GM13976 (cell line): ENCODE measurements at regions of chr17 and their contacts with region 1.

Region 1: GRCh38 chr17:7912927-7913524 is 3.1 kb downstream of the RNF227 start:
- DNase-seq: peak; percentile 81
- CTCF ChIP-seq: peak; percentile 56

Region 2: DNA sequence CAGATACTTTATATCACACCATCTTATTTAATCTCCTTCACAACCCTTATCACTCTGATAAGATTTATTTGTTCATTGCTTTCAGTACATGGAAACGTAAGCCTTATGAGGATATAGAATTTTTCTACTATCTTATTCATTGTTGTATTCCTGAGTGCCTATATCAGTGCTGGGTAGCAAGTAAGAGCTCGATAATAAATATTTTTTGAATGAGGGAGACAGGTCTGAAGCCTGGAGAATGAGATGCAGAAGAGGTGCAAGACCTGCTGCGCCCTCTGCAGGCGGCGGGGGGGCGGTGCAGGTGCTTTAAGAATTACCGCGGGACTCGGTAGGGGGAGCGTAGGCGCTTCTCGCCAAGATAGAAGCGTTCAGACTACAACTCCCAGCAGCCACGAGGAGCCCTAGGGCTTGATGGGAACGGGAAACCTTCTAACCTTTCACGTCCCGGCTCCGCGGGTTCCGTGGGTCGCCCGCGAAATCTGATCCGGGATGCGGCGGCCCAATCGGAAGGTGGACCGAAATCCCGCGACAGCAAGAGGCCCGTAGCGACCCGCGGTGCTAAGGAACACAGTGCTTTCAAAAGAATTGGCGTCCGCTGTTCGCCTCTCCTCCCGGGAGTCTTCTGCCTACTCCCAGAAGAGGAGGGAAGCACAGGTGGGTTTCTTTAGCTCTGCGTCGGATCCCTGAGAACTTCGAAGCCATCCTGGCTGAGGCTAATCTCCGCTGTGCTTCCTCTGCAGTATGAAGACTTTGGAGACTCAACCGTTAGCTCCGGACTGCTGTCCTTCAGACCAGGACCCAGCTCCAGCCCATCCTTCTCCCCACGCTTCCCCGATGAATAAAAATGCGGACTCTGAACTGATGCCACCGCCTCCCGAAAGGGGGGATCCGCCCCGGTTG is 224.9 kb before region 1 on chr17 and contains the start of gene WRAP53:
- in situ Hi-C with region 1: no loop called
- DNase-seq: peak; percentile 96
- CTCF ChIP-seq: peak; percentile 97

Region 3: DNA sequence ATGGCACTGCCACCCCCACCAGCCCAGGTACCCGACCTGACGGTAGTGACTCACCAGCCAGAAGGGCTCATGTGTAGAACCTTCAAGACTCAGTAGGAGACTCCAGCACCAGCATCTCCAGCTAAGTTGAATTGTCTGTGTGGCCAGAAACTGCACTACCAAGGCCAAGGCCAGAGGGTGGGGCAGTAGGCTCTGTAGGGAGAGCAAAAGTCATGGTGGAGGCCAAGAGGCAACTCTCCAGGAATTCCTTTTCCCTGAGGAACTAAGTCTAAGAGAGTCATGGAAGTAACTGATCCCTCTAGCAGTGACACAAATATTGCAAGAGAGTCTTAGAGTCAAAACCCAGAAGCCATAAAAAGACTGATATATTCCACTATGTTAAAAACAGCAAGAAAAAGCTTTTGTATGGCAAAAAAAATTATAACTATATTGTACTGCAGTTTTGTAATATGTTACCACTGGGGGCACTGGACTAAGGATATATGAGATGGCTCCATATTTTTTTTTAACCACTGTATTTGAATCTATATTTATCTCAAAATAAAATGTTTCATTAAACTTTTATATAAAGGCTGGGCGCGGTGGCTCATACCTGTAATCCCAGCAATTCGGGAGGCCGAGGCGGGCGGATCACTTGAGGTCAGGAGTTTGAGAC is 59.2 kb after region 1 on chr17:
- in situ Hi-C with region 1: no loop called
- DNase-seq: no peak
- CTCF ChIP-seq: no peak

Region 4: GRCh38 chr17:7989781-7990655 is 77.0 kb after region 1 on chr17:
- in situ Hi-C with region 1: loop called (anchors 5 kb)
- DNase-seq: peak; percentile 93
- CTCF ChIP-seq: peak; percentile 98

Region 5: DNA sequence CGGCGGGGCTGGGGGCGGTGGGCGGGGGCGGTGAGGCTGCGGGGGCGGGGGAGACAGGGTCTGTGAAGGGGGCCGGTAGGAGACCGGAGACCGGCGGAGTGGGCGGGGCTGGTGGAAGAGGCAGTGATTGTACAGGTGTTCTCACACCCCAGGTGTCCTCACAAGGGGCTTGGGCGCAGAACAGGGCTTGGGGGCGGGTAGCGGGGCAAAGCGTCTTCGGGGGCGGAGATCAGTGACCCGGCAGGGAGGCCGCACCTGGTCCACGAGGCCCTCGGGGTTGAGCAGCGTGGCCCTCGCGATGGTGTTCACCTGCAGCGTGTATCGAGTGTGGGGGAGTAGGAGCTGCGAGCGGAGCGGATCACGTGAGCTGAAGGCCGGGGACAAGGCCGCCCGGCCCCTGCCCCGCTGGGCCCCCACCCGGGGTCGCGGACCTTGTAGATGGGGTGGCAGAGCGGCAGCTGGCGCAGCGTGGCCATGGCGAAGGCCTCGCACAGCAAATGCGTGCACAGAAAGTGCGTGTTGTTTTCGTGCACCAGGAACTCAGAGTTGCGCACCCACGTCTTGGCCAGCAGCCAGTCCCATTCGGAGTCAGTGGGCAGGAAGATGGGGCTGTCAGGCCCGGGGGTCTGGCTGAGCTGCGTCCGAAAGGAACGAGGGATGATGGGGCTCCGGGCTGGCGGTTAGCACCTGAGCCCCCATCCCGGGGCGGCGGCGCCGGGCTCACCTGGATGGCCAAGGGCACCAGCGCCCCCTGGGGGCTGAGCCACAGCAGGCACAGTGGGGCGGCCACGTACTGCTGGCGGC is 196.8 kb after region 1 on chr17:
- in situ Hi-C with region 1: no loop called
- DNase-seq: peak; percentile 89
- CTCF ChIP-seq: peak; percentile 95

Region 6: DNA sequence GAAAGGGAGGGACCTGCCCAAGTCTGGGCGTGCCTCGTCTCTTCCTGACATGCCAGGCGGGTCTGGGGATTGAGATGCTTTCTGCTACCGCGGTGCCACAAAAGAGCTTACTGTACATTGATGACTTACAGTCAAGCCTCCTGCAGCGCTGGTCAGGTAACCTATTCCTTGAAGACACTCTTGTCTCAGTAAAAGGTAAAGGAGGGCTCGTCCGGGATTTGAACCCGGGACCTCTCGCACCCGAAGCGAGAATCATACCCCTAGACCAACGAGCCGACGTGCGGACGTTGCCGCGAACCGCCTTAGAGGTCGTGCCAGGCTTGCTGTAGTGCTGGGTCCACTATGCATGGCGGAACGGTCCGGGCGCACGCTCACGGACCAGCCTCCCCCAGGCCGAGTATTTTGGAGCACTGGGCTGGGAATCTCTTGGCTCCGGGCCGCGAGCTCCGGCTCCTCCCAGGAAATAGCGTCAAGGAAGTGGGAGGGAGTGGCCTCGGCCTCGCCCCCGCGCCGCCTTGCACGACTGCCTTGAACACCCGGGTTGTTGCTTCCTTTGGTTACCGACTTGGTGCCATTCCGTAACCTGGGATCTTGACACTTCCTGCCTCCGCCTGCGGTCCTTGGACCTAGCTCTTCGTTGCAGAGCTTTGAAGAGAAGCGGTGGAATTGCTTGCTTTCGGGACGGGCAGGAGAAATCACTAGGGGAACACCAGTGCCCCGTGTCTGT is 309.8 kb after region 1 on chr17:
- in situ Hi-C with region 1: no loop called
- DNase-seq: peak; percentile 81
- CTCF ChIP-seq: no peak